B cell (primary cell): ENCODE measurements at regions of chr19 and their contacts with region 1.

Region 1: GRCh38 chr19:40640744-40641143 is 39.6 kb downstream of the LTBP4 start:
- DNase-seq: no peak
- ATAC-seq: no peak
- H3K4me3 ChIP-seq: no peak overlapping the region
- H3K4me3 Mint-ChIP-seq: no peak overlapping the region
- H3K27ac ChIP-seq: no peak overlapping the region
- H3K27ac Mint-ChIP-seq: no peak overlapping the region
- H3K4me1 ChIP-seq: peaks cover 5 to 8% of the 10 kb centered on the region in 2 donors
- H3K4me1 Mint-ChIP-seq: peaks cover 9% of the 10 kb centered on the region
- H3K27me3 ChIP-seq: peaks cover 0 to 3% (median 0%) of the 10 kb centered on the region in 4 experiments
- H3K27me3 Mint-ChIP-seq: peaks cover 3% of the 10 kb centered on the region
- CTCF ChIP-seq: no peak

Region 2: GRCh38 chr19:39557441-39558151 is 1083.1 kb before region 1 on chr19:
- CTCF ChIA-PET with region 1: no interaction called
- POLR2A ChIA-PET with region 1: no interaction called
- intact Hi-C with region 1: no loop called
- DNase-seq: no peak
- ATAC-seq: no peak
- H3K4me3 ChIP-seq: no peak overlapping the region
- H3K4me3 Mint-ChIP-seq: peak overlapping the region; percentile 74
- H3K27ac ChIP-seq: peak overlapping the region in 1 of 2 donors; percentile 29
- H3K27ac Mint-ChIP-seq: peak overlapping the region; percentile 77
- H3K4me1 ChIP-seq: peaks cover 5 to 20% of the 10 kb centered on the region in 2 donors
- H3K4me1 Mint-ChIP-seq: peaks cover 28% of the 10 kb centered on the region
- H3K27me3 ChIP-seq: no peaks in the 10 kb centered on the region
- H3K27me3 Mint-ChIP-seq: no peaks in the 10 kb centered on the region
- CTCF ChIP-seq: no peak

Region 3: DNA sequence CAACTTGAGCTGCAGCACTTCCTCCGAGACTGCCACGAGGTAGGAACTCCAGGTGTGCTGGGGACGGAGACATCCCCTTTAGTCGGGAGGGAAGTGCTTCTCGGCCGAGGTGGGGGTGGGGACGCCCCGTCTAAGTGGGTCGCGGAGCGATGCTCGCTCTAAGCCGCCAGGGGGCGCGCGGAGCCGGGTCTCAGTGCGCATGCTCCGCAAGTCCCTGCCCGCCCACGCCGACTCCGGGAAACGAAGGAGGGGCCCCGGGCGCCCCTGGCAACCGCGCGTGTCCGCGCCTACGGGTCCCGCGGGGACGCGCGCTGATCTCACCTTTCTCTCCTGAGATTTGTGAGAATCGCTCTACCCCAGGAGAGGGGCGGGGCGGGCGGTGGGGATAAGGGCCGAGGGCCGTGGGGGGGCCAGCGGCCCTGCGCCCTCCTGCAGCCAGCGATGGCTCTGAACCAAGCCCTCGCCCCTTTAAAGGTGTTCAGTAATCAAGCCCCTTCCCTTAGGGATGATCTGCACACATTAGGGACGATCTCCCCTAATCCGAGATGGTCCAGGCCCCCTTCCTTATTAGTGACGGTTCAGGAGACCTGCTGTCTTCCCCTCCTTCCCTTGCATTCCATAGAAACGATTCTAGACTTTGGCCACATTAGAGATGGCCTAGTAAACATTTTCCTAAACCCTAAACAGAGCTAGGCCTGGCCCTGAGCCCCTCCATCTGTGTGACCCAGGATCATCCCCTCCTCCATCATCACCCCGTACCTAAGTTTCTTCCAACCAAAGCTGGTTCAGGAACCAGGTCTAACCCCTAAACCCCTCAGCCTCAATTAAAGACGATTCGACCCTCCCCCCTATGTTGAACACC is 111.4 kb before region 1 on chr19:
- CTCF ChIA-PET with region 1: interaction called, 17 read pairs
- POLR2A ChIA-PET with region 1: no interaction called
- intact Hi-C with region 1: no loop called
- DNase-seq: peak; percentile 95
- ATAC-seq: peak; percentile 91
- H3K4me3 ChIP-seq: peak overlapping the region; percentile 9 to 69 (median 41)
- H3K4me3 Mint-ChIP-seq: peak overlapping the region; percentile 82
- H3K27ac ChIP-seq: no peak overlapping the region
- H3K27ac Mint-ChIP-seq: peak overlapping the region; percentile 64
- H3K4me1 ChIP-seq: peaks cover 13 to 14% of the 10 kb centered on the region in 2 donors
- H3K4me1 Mint-ChIP-seq: peaks cover 13% of the 10 kb centered on the region
- H3K27me3 ChIP-seq: peaks cover 0 to 35% (median 18%) of the 10 kb centered on the region in 4 experiments
- H3K27me3 Mint-ChIP-seq: peaks cover 44% of the 10 kb centered on the region
- CTCF ChIP-seq: peak; percentile 91

Region 4: DNA sequence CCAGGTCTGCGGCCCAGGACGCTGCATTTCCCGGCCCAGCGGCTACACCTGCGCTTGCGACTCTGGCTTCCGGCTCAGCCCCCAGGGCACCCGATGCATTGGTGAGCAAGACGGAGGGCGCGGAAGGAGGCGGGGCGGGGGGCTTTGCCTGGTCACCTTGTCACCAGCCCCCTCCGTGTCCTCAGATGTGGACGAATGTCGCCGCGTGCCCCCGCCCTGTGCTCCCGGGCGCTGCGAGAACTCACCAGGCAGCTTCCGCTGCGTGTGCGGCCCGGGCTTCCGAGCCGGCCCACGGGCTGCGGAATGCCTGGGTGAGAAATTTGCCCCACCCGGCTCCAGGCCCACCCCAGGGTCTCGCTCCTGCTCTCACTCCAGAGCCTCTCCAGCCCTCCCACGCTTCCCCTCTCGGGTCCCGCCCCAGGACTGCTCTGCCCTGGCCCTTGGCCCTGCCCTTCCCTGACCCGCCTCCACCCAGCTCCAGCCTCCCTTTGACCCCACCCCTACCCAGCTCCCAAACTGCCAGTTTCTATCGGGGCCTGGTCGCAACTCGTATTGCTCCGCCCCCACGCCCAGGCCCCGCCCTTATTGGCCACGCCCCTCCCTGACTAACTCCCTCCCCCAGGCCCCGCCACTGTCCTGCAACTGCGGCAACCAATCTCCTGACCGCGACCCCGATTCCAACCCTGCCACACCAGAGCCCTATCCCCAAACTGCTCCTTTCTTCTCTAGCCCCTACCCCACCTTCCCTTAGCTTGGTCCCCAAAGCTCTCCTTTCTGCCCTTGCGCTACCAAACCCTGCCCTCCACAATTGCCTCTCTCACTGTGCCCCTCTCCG is 31.0 kb before region 1 on chr19:
- CTCF ChIA-PET with region 1: interaction called, 84 read pairs
- POLR2A ChIA-PET with region 1: no interaction called
- intact Hi-C with region 1: no loop called
- DNase-seq: peak; percentile 90
- ATAC-seq: peak; percentile 57
- H3K4me3 ChIP-seq: peak overlapping the region in 4 of 5 experiments; percentile 49 to 72 (median 62)
- H3K4me3 Mint-ChIP-seq: peak overlapping the region; percentile 92
- H3K27ac ChIP-seq: peak overlapping the region; percentile 83 to 93
- H3K27ac Mint-ChIP-seq: peak overlapping the region; percentile 98
- H3K4me1 ChIP-seq: peaks cover 38 to 58% of the 10 kb centered on the region in 2 donors
- H3K4me1 Mint-ChIP-seq: peaks cover 56% of the 10 kb centered on the region
- H3K27me3 ChIP-seq: no peaks in the 10 kb centered on the region
- H3K27me3 Mint-ChIP-seq: no peaks in the 10 kb centered on the region
- CTCF ChIP-seq: no peak